Left cardiac atrium (tissue), 4 donors: ENCODE measurements at regions of chr3 and their contacts with region 1.

Region 1: GRCh38 chr3:62201438-62202035 is 171.8 kb downstream of the FEZF2 start:
- DNase-seq: no peak
- ATAC-seq: no peak

Region 2: DNA sequence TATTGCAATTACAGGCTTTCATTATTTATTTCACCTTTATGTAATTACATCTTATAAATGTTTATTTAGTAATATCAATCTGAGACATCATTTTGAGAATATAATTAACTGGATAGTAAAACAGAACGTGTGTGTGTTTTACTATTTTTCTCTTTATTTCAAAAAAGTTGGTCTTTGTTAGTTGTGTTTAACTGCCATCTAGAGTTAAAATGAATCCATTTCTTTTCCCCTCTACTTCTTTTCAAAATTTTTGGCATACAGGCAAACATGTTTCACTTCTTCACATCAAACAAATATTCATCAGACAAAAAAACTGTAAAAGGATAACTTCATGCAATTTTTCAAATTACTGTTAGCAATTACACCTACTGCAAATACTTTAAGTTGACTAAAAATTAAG is 110.7 kb after region 1 on chr3:
- intact Hi-C with region 1: loop called (anchors 5 to 10 kb)
- DNase-seq: no peak
- ATAC-seq: no peak

Region 3: DNA sequence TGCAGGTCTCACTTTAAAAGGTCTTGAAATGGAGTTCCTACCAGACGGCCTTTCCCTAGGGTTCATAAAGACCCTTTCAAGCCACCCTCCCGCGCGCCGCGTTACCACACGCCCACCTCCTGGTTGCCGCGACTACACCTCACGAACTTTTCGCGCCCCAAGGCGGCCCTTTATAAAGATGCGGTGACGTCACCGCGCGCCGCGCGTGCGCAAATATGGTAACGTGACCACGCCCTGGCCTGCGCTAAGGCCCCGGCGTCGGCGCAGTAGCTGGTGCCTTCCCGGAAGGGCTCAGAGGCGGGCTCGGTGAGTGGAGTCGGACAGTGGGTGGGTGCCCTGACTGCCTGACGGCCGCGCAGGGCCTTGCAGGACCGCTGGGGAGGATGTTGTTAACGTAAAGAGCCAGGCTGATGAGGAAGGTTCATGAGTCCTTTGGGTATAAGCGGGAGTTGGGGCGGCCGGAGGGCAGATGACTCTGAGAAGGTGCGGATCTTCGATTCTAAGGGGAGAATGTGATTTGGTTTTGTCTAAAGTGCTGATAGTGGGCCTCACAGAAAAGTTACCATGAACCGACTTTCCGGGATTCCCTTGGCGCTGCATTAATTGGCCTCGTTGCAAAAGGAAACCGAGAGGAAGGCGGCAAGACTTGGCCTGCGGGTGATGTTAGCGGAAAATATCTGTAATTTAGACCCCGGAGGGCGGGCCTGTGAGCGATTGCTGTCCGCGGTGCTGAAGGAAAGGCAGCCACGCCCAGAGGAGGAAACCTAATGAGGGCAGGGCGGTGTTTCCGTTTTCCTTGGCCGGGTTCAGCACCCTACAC is 117.4 kb after region 1 on chr3:
- intact Hi-C with region 1: loop called (anchors 5 to 10 kb)
- DNase-seq: peak; percentile 93
- ATAC-seq: peak; percentile 99 to 100